ENCODE measurements at regions of chr3 and their contacts with region 1.

Region 1: GRCh38 chr3:190883973-190884832 is 21.7 kb upstream of the GMNC start:
- DNase-seq: peak; percentile 76
- H3K4me3 Mint-ChIP-seq: no peak overlapping the region
- H3K27ac Mint-ChIP-seq: no peak overlapping the region
- H3K4me1 Mint-ChIP-seq: peaks cover 4% of the 10 kb centered on the region
- H3K27me3 Mint-ChIP-seq: no peaks in the 10 kb centered on the region

Region 2: GRCh38 chr3:190443257-190443656 is 440.9 kb before region 1 on chr3:
- intact Hi-C with region 1: no loop called
- DNase-seq: no peak
- H3K4me3 Mint-ChIP-seq: no peak overlapping the region
- H3K27ac Mint-ChIP-seq: no peak overlapping the region
- H3K4me1 Mint-ChIP-seq: peaks cover 8% of the 10 kb centered on the region
- H3K27me3 Mint-ChIP-seq: peaks cover 8% of the 10 kb centered on the region

Region 3: GRCh38 chr3:191051037-191051436 is 166.8 kb after region 1 on chr3:
- intact Hi-C with region 1: loop called (anchors 1 kb)
- DNase-seq: no peak
- H3K4me3 Mint-ChIP-seq: no peak overlapping the region
- H3K27ac Mint-ChIP-seq: no peak overlapping the region
- H3K4me1 Mint-ChIP-seq: no peaks in the 10 kb centered on the region
- H3K27me3 Mint-ChIP-seq: no peaks in the 10 kb centered on the region

Region 4: GRCh38 chr3:192433704-192434103 is 1549.5 kb after region 1 on chr3:
- intact Hi-C with region 1: no loop called
- DNase-seq: no peak
- H3K4me3 Mint-ChIP-seq: no peak overlapping the region
- H3K27ac Mint-ChIP-seq: no peak overlapping the region
- H3K4me1 Mint-ChIP-seq: no peaks in the 10 kb centered on the region
- H3K27me3 Mint-ChIP-seq: peaks cover 3% of the 10 kb centered on the region